B cell (primary cell): ENCODE measurements at regions of chr17 and their contacts with region 1.

Region 1: GRCh38 chr17:48113201-48113676 is 5.7 kb downstream of the SNX11 start:
- DNase-seq: peak; percentile 66
- ATAC-seq: no peak
- H3K4me3 ChIP-seq: peak overlapping the region in 4 of 5 experiments; percentile 1 to 32 (median 12)
- H3K4me3 Mint-ChIP-seq: peak overlapping the region; percentile 81
- H3K27ac ChIP-seq: peak overlapping the region; percentile 67 to 96
- H3K27ac Mint-ChIP-seq: peak overlapping the region; percentile 91
- H3K4me1 ChIP-seq: peaks cover 53 to 64% of the 10 kb centered on the region in 2 donors
- H3K4me1 Mint-ChIP-seq: peaks cover 45% of the 10 kb centered on the region
- H3K27me3 ChIP-seq: no peaks in the 10 kb centered on the region
- H3K27me3 Mint-ChIP-seq: no peaks in the 10 kb centered on the region
- CTCF ChIP-seq: no peak

Region 2: GRCh38 chr17:48093341-48094045 is 19.7 kb before region 1 on chr17:
- CTCF ChIA-PET with region 1: interaction called, 33 read pairs
- POLR2A ChIA-PET with region 1: interaction called, 6 read pairs
- intact Hi-C with region 1: no loop called
- DNase-seq: no peak
- ATAC-seq: no peak
- H3K4me3 ChIP-seq: no peak overlapping the region
- H3K4me3 Mint-ChIP-seq: no peak overlapping the region
- H3K27ac ChIP-seq: no peak overlapping the region
- H3K27ac Mint-ChIP-seq: no peak overlapping the region
- H3K4me1 ChIP-seq: peaks cover 0 to 4% of the 10 kb centered on the region in 2 donors
- H3K4me1 Mint-ChIP-seq: peaks cover 13% of the 10 kb centered on the region
- H3K27me3 ChIP-seq: no peaks in the 10 kb centered on the region
- H3K27me3 Mint-ChIP-seq: no peaks in the 10 kb centered on the region
- CTCF ChIP-seq: no peak

Region 3: DNA sequence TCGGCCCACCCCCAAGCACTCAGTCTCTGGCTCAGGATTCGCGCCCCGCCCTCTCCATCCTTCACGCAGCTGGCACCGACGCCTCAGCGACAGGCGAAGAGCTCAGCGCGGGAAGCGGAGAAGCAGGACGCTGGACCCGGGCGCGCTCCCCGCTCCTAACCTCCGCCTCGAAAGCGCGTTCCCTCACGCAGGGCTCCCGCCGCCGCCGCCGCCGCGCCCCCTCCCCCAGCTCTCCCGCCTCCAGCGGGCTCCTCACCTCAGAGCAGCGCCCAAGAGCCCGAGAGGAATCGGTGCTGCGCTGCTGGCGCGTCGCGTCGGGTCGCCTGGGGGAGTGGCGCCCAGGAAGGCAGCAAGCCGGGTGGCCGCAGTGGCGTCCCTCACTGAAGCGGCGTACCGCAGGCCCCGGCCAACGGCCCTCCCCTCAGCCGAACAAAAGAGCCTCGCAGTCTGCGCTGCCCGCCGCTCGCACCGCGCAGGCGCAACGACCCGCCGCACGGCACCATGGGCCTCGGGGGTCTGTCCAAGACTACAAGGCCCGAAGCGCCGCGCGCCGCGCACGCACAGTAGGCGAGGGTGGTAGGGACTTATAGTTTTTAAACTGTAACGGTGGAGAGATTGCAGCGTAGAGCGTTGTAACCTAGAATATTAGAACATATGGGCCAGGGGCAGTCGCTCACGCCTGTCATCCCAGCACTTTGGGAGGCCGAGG is 12.1 kb before region 1 on chr17 and contains the start of gene CBX1:
- CTCF ChIA-PET with region 1: interaction called, 33 read pairs
- POLR2A ChIA-PET with region 1: interaction called, 8 read pairs
- intact Hi-C with region 1: loop called (anchors 1 kb)
- DNase-seq: peak; percentile 94
- ATAC-seq: peak; percentile 94
- H3K4me3 ChIP-seq: peak within 1 kb of the TSS; percentile 68 to 85 (median 77)
- H3K4me3 Mint-ChIP-seq: peak within 1 kb of the TSS; percentile 91
- H3K27ac ChIP-seq: peak within 1 kb of the TSS; percentile 72 to 76
- H3K27ac Mint-ChIP-seq: peak within 1 kb of the TSS; percentile 93
- H3K4me1 ChIP-seq: peaks cover 18 to 28% of the 10 kb centered on the region in 2 donors
- H3K4me1 Mint-ChIP-seq: peaks cover 41% of the 10 kb centered on the region
- H3K27me3 ChIP-seq: no peaks in the 10 kb centered on the region
- H3K27me3 Mint-ChIP-seq: no peaks in the 10 kb centered on the region
- CTCF ChIP-seq: no peak
- total RNA-seq, gene CBX1: 29.7 and 33.1 TPM in 2 replicates

Region 4: GRCh38 chr17:48131216-48131824 is 18.1 kb after region 1 on chr17:
- CTCF ChIA-PET with region 1: interaction called, 19 read pairs
- POLR2A ChIA-PET with region 1: interaction called, 11 read pairs
- intact Hi-C with region 1: loop called (anchors 2 kb)
- DNase-seq: peak; percentile 79
- ATAC-seq: peak; percentile 87
- H3K4me3 ChIP-seq: no peak overlapping the region
- H3K4me3 Mint-ChIP-seq: no peak overlapping the region
- H3K27ac ChIP-seq: no peak overlapping the region
- H3K27ac Mint-ChIP-seq: peak overlapping the region; percentile 7
- H3K4me1 ChIP-seq: no peaks in the 10 kb centered on the region
- H3K4me1 Mint-ChIP-seq: peaks cover 3% of the 10 kb centered on the region
- H3K27me3 ChIP-seq: no peaks in the 10 kb centered on the region
- H3K27me3 Mint-ChIP-seq: no peaks in the 10 kb centered on the region
- CTCF ChIP-seq: peak; percentile 90

Region 5: GRCh38 chr17:49260011-49260921 is 1147.0 kb after region 1 on chr17:
- CTCF ChIA-PET with region 1: no interaction called
- POLR2A ChIA-PET with region 1: interaction called, 10 read pairs
- intact Hi-C with region 1: no loop called
- DNase-seq: peak; percentile 72
- ATAC-seq: peak; percentile 80
- H3K4me3 ChIP-seq: peak overlapping the region; percentile 26 to 68 (median 52)
- H3K4me3 Mint-ChIP-seq: peak overlapping the region; percentile 86
- H3K27ac ChIP-seq: peak overlapping the region in 1 of 2 donors; percentile 12
- H3K27ac Mint-ChIP-seq: no peak overlapping the region
- H3K4me1 ChIP-seq: peaks cover 13 to 14% of the 10 kb centered on the region in 2 donors
- H3K4me1 Mint-ChIP-seq: peaks cover 12% of the 10 kb centered on the region
- H3K27me3 ChIP-seq: peaks cover 0 to 26% (median 4%) of the 10 kb centered on the region in 4 experiments
- H3K27me3 Mint-ChIP-seq: peaks cover 22% of the 10 kb centered on the region
- CTCF ChIP-seq: no peak